MCF 10A (cell line): ENCODE measurements at regions of chr13 and their contacts with region 1.

Region 1: DNA sequence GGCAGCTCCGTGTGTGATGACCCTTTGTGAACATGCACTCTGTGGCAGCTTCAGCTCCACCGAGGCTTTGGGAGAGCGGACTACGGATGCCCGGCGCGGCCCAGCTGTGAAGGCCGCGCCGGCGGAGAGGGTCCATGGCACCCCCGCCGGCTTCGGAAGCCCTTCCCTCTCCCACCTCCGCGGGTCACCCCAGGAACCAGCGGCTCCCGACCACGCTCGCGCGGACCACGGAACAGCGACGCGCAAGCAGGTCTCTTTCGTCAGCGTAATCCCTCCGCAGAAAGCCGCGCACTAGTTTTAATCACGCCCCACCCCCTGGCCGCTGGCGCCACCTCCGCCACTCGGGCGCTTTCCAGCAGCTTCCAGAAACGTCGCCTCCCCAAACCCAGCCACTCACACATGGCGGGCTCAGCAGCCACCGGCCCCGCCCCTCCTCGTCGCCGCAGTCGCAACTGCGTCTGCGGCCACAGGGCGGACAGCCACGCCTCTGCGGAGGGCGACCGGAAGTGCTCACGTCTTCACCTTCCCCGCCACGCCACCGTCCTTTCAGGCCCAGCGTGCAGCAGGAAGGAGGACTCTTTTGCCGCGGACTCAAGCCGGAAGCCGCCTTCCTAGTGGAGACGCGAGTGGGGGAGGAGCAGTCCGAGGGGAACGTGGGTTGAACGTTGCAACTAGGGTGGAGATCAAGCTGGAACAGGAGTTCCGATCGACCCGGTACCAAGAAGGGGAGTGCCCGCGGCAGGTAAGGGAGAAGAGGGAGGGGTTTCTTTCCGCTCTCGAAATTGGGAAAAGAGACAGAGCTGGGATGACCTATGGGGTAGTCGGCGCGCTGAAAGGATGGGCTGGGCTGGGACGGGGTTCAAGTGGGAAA is at the start of gene USPL1:
- DNase-seq: peak; percentile 97
- H3K4me3 Mint-ChIP-seq: no peak within 1 kb of the TSS
- H3K27ac Mint-ChIP-seq: no peak within 1 kb of the TSS
- H3K4me1 Mint-ChIP-seq: peaks cover 20% of the 10 kb centered on the region
- H3K27me3 Mint-ChIP-seq: no peaks in the 10 kb centered on the region
- CTCF ChIP-seq: no peak
- total RNA-seq, gene USPL1: 9.8 and 11.8 TPM in 2 replicates

Region 2: DNA sequence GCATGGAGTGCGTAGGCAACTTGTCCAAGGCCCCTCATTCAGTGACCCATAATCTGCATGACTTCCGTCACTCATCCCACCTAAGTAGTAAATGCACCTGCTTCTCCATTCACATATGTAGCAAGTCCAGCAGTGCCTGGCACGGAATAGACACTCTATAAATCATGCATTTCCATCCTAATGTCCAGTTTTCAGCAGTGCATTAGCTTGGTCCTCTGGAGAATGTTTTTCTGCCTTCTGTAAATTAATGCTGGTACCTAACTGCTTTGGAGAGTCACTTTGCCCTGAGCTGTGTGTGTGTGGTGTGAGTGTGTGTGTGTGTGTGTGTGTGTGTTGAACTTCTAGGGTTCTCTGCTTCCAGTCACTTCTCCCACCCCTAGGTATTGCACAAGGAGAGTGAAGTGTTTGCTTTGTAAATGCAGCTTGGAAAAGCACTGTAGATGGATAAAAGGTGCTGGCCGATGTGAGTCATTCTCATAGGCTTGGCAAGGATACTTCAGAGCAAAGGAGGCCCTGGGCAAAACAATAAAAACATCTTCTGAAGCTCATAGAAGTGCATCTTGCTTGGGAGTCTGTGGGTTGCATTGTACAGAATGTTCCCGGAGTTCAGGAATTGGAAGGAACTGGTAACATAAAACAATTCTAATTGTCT is 492.0 kb before region 1 on chr13:
- CTCF ChIA-PET with region 1: no interaction called
- POLR2A ChIA-PET with region 1: interaction called, 14 read pairs
- intact Hi-C with region 1: no loop called
- DNase-seq: peak; percentile 95
- H3K4me3 Mint-ChIP-seq: peak overlapping the region; percentile 47
- H3K27ac Mint-ChIP-seq: peak overlapping the region; percentile 79
- H3K4me1 Mint-ChIP-seq: peaks cover 48% of the 10 kb centered on the region
- H3K27me3 Mint-ChIP-seq: no peaks in the 10 kb centered on the region
- CTCF ChIP-seq: no peak

Region 3: GRCh38 chr13:30395192-30396084 is 222.1 kb before region 1 on chr13:
- CTCF ChIA-PET with region 1: interaction called, 4 read pairs
- POLR2A ChIA-PET with region 1: interaction called, 22 read pairs
- intact Hi-C with region 1: no loop called
- DNase-seq: peak; percentile 94
- H3K4me3 Mint-ChIP-seq: peak overlapping the region; percentile 80
- H3K27ac Mint-ChIP-seq: peak overlapping the region; percentile 93
- H3K4me1 Mint-ChIP-seq: peaks cover 10% of the 10 kb centered on the region
- H3K27me3 Mint-ChIP-seq: no peaks in the 10 kb centered on the region
- CTCF ChIP-seq: no peak

Region 4: GRCh38 chr13:30572859-30573275 is 44.7 kb before region 1 on chr13:
- CTCF ChIA-PET with region 1: interaction called, 3 read pairs
- POLR2A ChIA-PET with region 1: interaction called, 43 read pairs
- intact Hi-C with region 1: loop called (anchors 1 kb)
- DNase-seq: peak; percentile 54
- H3K4me3 Mint-ChIP-seq: peak overlapping the region; percentile 68
- H3K27ac Mint-ChIP-seq: peak overlapping the region; percentile 89
- H3K4me1 Mint-ChIP-seq: peaks cover 38% of the 10 kb centered on the region
- H3K27me3 Mint-ChIP-seq: no peaks in the 10 kb centered on the region
- CTCF ChIP-seq: peak; percentile 24

Region 5: GRCh38 chr13:30739761-30740642 is 122.5 kb after region 1 on chr13:
- CTCF ChIA-PET with region 1: no interaction called
- POLR2A ChIA-PET with region 1: interaction called, 16 read pairs
- intact Hi-C with region 1: loop called (anchors 5 kb)
- DNase-seq: peak; percentile 78
- H3K4me3 Mint-ChIP-seq: peak overlapping the region; percentile 23
- H3K27ac Mint-ChIP-seq: peak overlapping the region; percentile 68
- H3K4me1 Mint-ChIP-seq: peaks cover 34% of the 10 kb centered on the region
- H3K27me3 Mint-ChIP-seq: no peaks in the 10 kb centered on the region
- CTCF ChIP-seq: no peak

Region 6: GRCh38 chr13:31012655-31013024 is 395.1 kb after region 1 on chr13:
- CTCF ChIA-PET with region 1: no interaction called
- POLR2A ChIA-PET with region 1: no interaction called
- intact Hi-C with region 1: loop called (anchors 10 kb)
- DNase-seq: peak; percentile 50
- H3K4me3 Mint-ChIP-seq: no peak overlapping the region
- H3K27ac Mint-ChIP-seq: no peak overlapping the region
- H3K4me1 Mint-ChIP-seq: peaks cover 5% of the 10 kb centered on the region
- H3K27me3 Mint-ChIP-seq: no peaks in the 10 kb centered on the region
- CTCF ChIP-seq: peak; percentile 35